Common myeloid progenitor, CD34-positive (primary cell): ENCODE measurements at regions of chr21 and their contacts with region 1.

Region 1: GRCh38 chr21:34707876-34708325 is 39.1 kb downstream of the CLIC6 start:
- DNase-seq: peak; percentile 54 to 90 (median 86)
- H3K4me3 ChIP-seq: no peak overlapping the region
- H3K27ac ChIP-seq: no peak overlapping the region
- H3K4me1 ChIP-seq: peaks cover 0 to 14% (median 11%) of the 10 kb centered on the region in 4 experiments
- H3K27me3 ChIP-seq: peaks cover 0 to 4% (median 0%) of the 10 kb centered on the region in 5 experiments

Region 2: GRCh38 chr21:34688145-34688544 is 19.8 kb before region 1 on chr21:
- CTCF ChIA-PET with region 1: interaction called, 11 read pairs
- POLR2A ChIA-PET with region 1: no interaction called
- DNase-seq: peak in 1 of 3 donors; percentile 36
- H3K4me3 ChIP-seq: no peak overlapping the region
- H3K27ac ChIP-seq: no peak overlapping the region
- H3K4me1 ChIP-seq: peaks cover 0 to 2% (median 0%) of the 10 kb centered on the region in 4 experiments
- H3K27me3 ChIP-seq: peaks cover 0 to 7% (median 2%) of the 10 kb centered on the region in 5 experiments

Region 3: DNA sequence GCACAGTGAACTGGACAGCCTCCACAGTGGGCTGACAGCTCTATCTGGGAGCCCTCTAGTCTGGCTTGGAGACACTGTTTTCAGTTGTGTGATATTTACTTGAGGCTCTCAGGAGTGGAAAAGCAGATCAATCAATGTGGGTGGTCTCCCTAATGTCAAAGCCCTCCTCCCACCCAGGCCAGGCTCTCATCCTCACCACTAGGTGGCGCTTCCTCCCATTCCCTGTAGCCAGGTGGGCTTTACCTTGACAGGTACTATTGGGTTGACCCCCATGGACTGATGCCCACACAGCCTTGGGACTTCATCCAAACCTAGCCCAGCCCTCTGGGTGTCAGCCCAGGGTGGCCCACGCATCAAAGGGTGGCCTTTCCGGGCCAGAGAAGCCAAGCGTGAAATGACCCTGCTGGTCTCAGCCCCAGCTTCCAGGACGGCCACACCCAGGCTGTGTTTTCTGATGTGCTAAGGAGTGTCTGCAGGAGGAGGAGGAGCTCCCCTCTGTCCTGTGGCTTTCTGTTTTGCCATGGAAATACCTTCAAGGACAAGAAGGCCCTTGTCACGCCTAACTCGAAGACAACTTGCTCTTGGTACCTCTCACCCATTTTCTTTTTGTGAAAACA is 14.9 kb after region 1 on chr21:
- CTCF ChIA-PET with region 1: interaction called, 12 read pairs
- POLR2A ChIA-PET with region 1: no interaction called
- DNase-seq: peak; percentile 19 to 21 (median 20)
- H3K4me3 ChIP-seq: no peak overlapping the region
- H3K27ac ChIP-seq: no peak overlapping the region
- H3K4me1 ChIP-seq: peaks cover 0 to 9% (median 2%) of the 10 kb centered on the region in 4 experiments
- H3K27me3 ChIP-seq: peaks cover 0 to 2% (median 0%) of the 10 kb centered on the region in 5 experiments